HEK293T (cell line): ENCODE measurements at regions of chr3 and their contacts with region 1.

Region 1: DNA sequence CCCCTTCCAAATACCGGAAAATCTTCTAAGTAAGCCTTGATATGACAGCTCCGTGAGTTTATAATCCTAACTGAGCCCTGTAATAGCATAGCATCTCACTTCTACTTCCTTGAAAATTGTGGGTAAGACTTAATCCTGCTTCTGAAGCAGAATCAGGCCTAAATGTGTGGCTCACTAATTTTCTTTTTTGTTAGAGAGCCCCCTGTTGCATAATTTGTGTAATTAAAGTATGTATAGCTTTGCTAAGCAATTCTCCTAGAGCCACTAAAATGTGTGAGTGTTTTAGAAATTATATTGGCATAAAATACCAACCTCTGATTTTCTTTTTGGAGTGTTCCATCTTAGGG is 304.4 kb downstream of the FGF12 start:
- DNase-seq: no peak

Region 2: DNA sequence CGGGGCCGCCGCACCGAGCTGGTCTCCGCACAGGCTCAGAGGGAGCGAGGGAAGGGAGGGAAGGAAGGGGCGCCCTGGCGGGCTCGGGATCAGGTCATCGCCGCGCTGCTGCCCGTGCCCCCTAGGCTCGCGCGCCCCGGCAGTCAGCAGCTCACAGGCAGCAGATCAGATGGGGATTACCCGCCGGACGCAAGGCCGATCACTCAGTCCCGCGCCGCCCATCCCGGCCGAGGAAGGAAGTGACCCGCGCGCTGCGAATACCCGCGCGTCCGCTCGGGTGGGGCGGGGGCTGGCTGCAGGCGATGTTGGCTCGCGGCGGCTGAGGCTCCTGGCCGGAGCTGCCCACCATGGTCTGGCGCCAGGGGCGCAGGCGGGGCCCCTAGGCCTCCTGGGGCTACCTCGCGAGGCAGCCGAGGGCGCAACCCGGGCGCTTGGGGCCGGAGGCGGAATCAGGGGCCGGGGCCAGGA is 13.6 kb before region 1 on chr3:
- CTCF ChIA-PET with region 1: interaction called, 15 read pairs
- POLR2A ChIA-PET with region 1: interaction called, 4 read pairs
- DNase-seq: peak; percentile 31

Region 3: DNA sequence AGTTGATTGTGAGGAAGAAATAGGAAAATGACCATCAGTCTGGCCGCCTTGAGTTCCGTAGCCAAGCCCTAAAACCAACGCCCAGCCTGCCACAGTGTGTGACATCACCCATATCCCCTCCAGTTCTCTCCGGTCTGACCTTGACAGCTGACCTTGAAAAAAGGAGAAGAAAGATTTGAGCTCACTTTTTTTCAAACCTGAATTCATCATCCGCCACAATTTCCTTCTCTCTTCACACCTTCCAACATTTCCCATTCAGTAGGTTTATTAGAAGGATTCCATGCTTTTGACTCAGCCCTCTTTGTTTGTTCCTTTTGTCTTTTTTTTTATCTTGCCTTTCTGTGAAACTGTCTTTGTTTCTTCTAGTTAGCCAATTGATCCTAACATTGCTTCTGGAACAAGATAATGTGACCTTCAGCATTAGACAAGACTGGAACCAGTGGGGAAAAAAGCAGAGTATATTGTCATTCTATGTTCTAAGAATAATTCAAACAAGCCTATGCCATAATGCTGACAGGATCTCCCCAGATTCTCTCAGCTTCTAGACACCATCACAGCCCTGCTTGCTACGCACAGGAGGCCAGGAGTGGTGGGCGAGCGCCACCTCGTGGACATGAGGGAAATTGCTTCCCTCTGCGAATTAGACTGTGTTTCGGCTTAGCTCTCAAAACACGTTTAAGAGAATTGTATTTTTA is 21.3 kb after region 1 on chr3:
- CTCF ChIA-PET with region 1: interaction called, 10 read pairs
- POLR2A ChIA-PET with region 1: no interaction called
- DNase-seq: peak; percentile 64

Region 4: GRCh38 chr3:192687488-192688152 is 264.6 kb after region 1 on chr3:
- CTCF ChIA-PET with region 1: no interaction called
- POLR2A ChIA-PET with region 1: no interaction called
- DNase-seq: no peak

Region 5: GRCh38 chr3:192847941-192848340 is 425.0 kb after region 1 on chr3:
- CTCF ChIA-PET with region 1: no interaction called
- POLR2A ChIA-PET with region 1: no interaction called
- DNase-seq: no peak